ENCODE measurements at regions of chr1 and their contacts with region 1.

Region 1: GRCh38 chr1:33633019-33633801 is 160.8 kb downstream of the ZSCAN20 start:
- DNase-seq: peak; percentile 75
- H3K4me3 ChIP-seq: no peak overlapping the region
- H3K27ac ChIP-seq: no peak overlapping the region
- H3K27me3 ChIP-seq: no peaks in the 10 kb centered on the region
- CTCF ChIP-seq: peak; percentile 100

Region 2: GRCh38 chr1:33410091-33410701 is 223.0 kb before region 1 on chr1:
- CTCF ChIA-PET with region 1: no interaction called
- POLR2A ChIA-PET with region 1: no interaction called
- DNase-seq: no peak
- H3K4me3 ChIP-seq: no peak overlapping the region
- H3K27ac ChIP-seq: no peak overlapping the region
- H3K27me3 ChIP-seq: no peaks in the 10 kb centered on the region
- CTCF ChIP-seq: no peak

Region 3: GRCh38 chr1:33610864-33611455 is 22.2 kb before region 1 on chr1:
- CTCF ChIA-PET with region 1: interaction called, 19 read pairs
- POLR2A ChIA-PET with region 1: no interaction called
- DNase-seq: no peak
- H3K4me3 ChIP-seq: no peak overlapping the region
- H3K27ac ChIP-seq: no peak overlapping the region
- H3K27me3 ChIP-seq: no peaks in the 10 kb centered on the region
- CTCF ChIP-seq: no peak

Region 4: GRCh38 chr1:33660244-33660643 is 27.0 kb after region 1 on chr1:
- CTCF ChIA-PET with region 1: interaction called, 18 read pairs
- POLR2A ChIA-PET with region 1: no interaction called
- DNase-seq: no peak
- H3K4me3 ChIP-seq: no peak overlapping the region
- H3K27ac ChIP-seq: no peak overlapping the region
- H3K27me3 ChIP-seq: no peaks in the 10 kb centered on the region
- CTCF ChIP-seq: no peak

Region 5: GRCh38 chr1:34162852-34163766 is 529.9 kb after region 1 on chr1:
- CTCF ChIA-PET with region 1: interaction called, 104 read pairs
- POLR2A ChIA-PET with region 1: no interaction called
- DNase-seq: peak; percentile 89
- H3K4me3 ChIP-seq: peak overlapping the region; percentile 68
- H3K27ac ChIP-seq: peak overlapping the region; percentile 77
- H3K27me3 ChIP-seq: peaks cover 6% of the 10 kb centered on the region
- CTCF ChIP-seq: peak; percentile 88

Region 6: DNA sequence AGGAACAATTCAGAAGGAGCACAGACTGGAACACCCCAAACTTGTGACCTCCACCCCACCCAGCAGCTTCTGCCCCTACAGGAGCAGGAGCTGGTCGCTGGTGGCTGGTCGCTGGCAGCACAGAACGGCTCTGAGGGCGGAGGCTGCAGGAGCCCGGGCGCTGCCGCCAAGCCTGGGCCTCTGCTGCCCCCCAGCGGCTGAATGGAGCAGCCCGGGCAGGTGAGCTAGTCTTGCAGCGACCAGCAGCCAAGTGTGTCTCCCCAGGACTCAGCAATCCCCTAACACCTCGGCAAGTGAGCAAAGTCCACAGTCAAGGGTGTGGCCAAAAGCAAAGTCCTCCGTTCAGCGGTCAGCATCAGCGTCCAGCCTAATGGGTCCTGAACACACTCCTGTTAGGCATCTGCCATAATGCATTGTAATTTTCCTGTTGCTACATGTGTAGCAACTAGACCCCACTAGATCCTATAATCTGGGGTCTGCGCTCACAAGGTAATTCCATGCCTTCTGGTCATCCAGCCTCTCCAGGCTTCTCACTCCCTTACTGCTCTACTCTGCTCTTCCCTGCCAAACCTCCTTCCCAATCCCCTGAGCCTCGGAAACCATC is 1109.6 kb after region 1 on chr1:
- CTCF ChIA-PET with region 1: interaction called, 57 read pairs
- POLR2A ChIA-PET with region 1: no interaction called
- DNase-seq: peak; percentile 7
- H3K4me3 ChIP-seq: no peak overlapping the region
- H3K27ac ChIP-seq: no peak overlapping the region
- H3K27me3 ChIP-seq: peaks cover 18% of the 10 kb centered on the region
- CTCF ChIP-seq: peak; percentile 90